ENCODE measurements at regions of chr17 and their contacts with region 1.

Region 1: DNA sequence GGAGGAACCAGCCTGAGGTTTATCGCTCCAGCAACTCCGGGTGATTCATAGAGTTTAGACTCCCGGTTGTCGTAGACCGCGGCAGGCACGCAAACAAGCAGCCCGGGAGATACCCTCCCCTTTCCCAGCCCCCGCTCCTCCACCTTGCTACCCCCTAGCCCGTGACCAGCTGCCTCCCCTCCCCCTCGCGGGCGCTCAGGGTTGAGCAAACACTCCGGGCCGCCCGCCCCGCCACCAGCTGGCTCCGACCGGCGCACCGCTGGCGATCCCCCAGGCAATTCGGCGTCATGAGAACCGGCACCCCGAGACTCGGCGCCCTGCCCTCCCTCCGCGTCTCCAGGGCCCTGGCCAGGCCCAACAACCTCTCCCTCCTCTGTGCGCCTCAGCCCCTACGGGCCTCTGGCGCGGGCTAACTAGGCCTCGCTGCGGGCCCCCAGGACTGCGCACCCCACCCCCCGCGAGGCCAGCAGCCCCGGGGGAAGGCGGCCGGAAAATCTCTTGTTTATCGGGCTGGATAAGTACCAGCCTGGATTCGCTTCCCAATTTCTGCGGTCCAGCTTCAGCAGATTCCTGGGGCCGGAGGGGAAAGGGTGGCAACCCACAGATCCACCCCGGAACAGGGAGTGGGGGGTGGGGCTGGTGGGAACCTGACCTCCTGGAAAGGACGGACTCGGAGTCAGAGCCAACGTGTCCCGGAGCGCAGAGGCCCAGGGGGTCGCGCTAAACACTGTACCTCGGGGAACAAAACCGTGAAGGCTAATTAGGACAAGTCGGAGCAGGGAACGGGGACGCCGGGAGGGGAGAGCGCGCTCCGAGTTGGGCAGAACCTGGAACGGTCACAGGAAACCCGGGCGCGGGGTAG is 951 bp upstream of the GPRC5C start:
- DNase-seq: peak; percentile 91

Region 2: GRCh38 chr17:74386386-74386785 is 44.6 kb before region 1 on chr17:
- intact Hi-C with region 1: loop called (anchors 2 kb)
- DNase-seq: peak; percentile 84

Region 3: GRCh38 chr17:74442670-74443515 is 12.0 kb after region 1 on chr17:
- intact Hi-C with region 1: loop called (anchors 2 kb)
- DNase-seq: peak; percentile 91

Region 4: GRCh38 chr17:74457146-74457819 is 26.3 kb after region 1 on chr17:
- intact Hi-C with region 1: loop called (anchors 2 kb)
- DNase-seq: peak; percentile 90